Activated CD4-positive, alpha-beta memory T cell treated with anti-CD3 and anti-CD28 coated beads, Interleukin-2, amount 10 ng/mL, durations not matched to agents 7 days and 5 days (primary cell): ENCODE measurements at regions of chr1 and their contacts with region 1.

Region 1: DNA sequence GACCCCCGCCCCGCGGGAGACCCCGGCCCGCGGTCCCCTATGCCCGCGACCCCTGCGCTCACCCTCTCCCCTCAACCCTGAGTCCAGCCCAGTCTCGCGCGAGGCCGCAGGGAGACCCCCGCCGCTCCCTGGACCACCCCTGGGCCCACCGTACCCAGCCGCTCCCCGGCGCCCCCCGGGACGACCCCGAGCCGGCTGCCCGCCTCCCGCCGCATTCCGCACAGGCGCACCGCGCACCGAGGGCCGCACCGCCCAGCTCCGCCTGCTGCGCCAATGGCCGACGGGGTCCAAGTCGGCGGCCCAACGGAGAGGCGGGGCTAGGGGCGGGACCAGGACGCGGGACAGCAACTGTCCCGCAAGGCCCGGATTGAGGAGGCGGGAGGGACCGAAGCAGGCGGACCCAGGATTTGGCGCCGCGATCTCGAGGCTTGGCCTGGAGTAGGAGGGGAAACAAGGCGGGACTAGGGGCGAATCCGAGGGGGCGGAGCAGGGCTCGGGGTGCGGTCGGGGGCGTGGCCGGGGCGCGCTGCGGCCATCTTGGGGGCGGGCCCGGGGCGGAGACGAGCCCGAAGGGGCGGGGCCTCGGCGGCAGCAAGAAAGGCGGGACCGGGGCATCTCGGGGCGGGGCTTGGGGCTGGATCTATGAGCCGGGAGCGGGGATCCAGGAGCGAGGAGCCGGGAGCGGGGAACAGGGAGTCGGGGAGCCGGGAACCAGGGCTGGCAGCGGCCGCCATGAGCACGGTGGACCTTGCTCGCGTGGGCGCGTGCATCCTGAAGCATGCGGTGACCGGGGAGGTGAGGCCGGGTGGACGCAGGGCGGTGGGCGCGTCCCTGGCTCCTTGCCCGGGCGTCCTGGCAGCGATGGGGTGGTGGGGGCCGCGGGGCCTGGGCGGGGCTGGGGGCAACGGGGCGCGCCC is at the start of gene PRXL2B:
- DNase-seq: peak; percentile 99
- H3K4me3 Mint-ChIP-seq: peak within 1 kb of the TSS; percentile 88
- H3K27ac Mint-ChIP-seq: peak within 1 kb of the TSS; percentile 93
- H3K4me1 Mint-ChIP-seq: peaks cover 33% of the 10 kb centered on the region
- H3K27me3 Mint-ChIP-seq: no peaks in the 10 kb centered on the region
- total RNA-seq, gene PRXL2B: 17.0 to 22.2 TPM

Region 2: GRCh38 chr1:2391041-2391930 is 195.1 kb before region 1 on chr1 and contains the starts of genes MORN1 and RER1:
- CTCF ChIA-PET with region 1: interaction called, 3 read pairs
- POLR2A ChIA-PET with region 1: interaction called, 26 read pairs
- DNase-seq: peak; percentile 99
- H3K4me3 Mint-ChIP-seq: peak within 1 kb of the TSS; percentile 85
- H3K27ac Mint-ChIP-seq: peak within 1 kb of the TSS; percentile 79
- H3K4me1 Mint-ChIP-seq: peaks cover 45% of the 10 kb centered on the region
- H3K27me3 Mint-ChIP-seq: no peaks in the 10 kb centered on the region
- total RNA-seq, gene MORN1: 6.2 to 6.3 TPM
- total RNA-seq, gene RER1: 151 to 160 TPM

Region 3: GRCh38 chr1:2412519-2413233 is 173.7 kb before region 1 on chr1 and contains the start of gene PEX10:
- CTCF ChIA-PET with region 1: interaction called, 18 read pairs
- POLR2A ChIA-PET with region 1: interaction called, 18 read pairs
- DNase-seq: peak; percentile 99
- H3K4me3 Mint-ChIP-seq: peak within 1 kb of the TSS; percentile 85
- H3K27ac Mint-ChIP-seq: peak within 1 kb of the TSS; percentile 94
- H3K4me1 Mint-ChIP-seq: peaks cover 40% of the 10 kb centered on the region
- H3K27me3 Mint-ChIP-seq: no peaks in the 10 kb centered on the region
- total RNA-seq, gene PEX10: 6.8 to 9.5 TPM

Region 4: GRCh38 chr1:2525920-2526823 is 60.2 kb before region 1 on chr1 and contains the start of gene PANK4:
- CTCF ChIA-PET with region 1: interaction called, 18 read pairs
- POLR2A ChIA-PET with region 1: interaction called, 30 read pairs
- DNase-seq: peak; percentile 93
- H3K4me3 Mint-ChIP-seq: peak within 1 kb of the TSS; percentile 80
- H3K27ac Mint-ChIP-seq: peak within 1 kb of the TSS; percentile 93
- H3K4me1 Mint-ChIP-seq: peaks cover 51% of the 10 kb centered on the region
- H3K27me3 Mint-ChIP-seq: peaks cover 21% of the 10 kb centered on the region
- total RNA-seq, gene PANK4: 71.7 to 72.6 TPM

Region 5: DNA sequence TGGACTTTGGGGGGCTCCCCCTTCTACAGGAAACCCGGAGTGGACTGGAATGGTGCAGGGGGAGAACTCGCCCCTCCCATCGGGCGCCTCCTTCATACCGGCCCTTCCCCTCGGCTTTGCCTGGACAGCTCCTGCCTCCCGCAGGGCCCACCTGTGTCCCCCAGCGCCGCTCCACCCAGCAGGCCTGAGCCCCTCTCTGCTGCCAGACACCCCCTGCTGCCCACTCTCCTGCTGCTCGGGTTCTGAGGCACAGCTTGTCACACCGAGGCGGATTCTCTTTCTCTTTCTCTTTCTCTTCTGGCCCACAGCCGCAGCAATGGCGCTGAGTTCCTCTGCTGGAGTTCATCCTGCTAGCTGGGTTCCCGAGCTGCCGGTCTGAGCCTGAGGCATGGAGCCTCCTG is 30.1 kb before region 1 on chr1 and contains the start of gene TNFRSF14:
- CTCF ChIA-PET with region 1: interaction called, 32 read pairs
- POLR2A ChIA-PET with region 1: interaction called, 169 read pairs
- DNase-seq: peak; percentile 85
- H3K4me3 Mint-ChIP-seq: peak within 1 kb of the TSS; percentile 95
- H3K27ac Mint-ChIP-seq: peak within 1 kb of the TSS; percentile 95
- H3K4me1 Mint-ChIP-seq: peaks cover 44% of the 10 kb centered on the region
- H3K27me3 Mint-ChIP-seq: no peaks in the 10 kb centered on the region
- total RNA-seq, gene TNFRSF14: 171 to 173 TPM

Region 6: GRCh38 chr1:2561898-2562545 is 24.4 kb before region 1 on chr1:
- CTCF ChIA-PET with region 1: interaction called, 32 read pairs
- POLR2A ChIA-PET with region 1: interaction called, 169 read pairs
- DNase-seq: no peak
- H3K4me3 Mint-ChIP-seq: no peak overlapping the region
- H3K27ac Mint-ChIP-seq: no peak overlapping the region
- H3K4me1 Mint-ChIP-seq: peaks cover 19% of the 10 kb centered on the region
- H3K27me3 Mint-ChIP-seq: no peaks in the 10 kb centered on the region

Region 7: GRCh38 chr1:2575801-2576663 is 10.4 kb before region 1 on chr1:
- CTCF ChIA-PET with region 1: interaction called, 4 read pairs
- POLR2A ChIA-PET with region 1: interaction called, 44 read pairs
- DNase-seq: no peak
- H3K4me3 Mint-ChIP-seq: no peak overlapping the region
- H3K27ac Mint-ChIP-seq: peak overlapping the region; percentile 92
- H3K4me1 Mint-ChIP-seq: peaks cover 58% of the 10 kb centered on the region
- H3K27me3 Mint-ChIP-seq: peaks cover 3% of the 10 kb centered on the region

Region 8: DNA sequence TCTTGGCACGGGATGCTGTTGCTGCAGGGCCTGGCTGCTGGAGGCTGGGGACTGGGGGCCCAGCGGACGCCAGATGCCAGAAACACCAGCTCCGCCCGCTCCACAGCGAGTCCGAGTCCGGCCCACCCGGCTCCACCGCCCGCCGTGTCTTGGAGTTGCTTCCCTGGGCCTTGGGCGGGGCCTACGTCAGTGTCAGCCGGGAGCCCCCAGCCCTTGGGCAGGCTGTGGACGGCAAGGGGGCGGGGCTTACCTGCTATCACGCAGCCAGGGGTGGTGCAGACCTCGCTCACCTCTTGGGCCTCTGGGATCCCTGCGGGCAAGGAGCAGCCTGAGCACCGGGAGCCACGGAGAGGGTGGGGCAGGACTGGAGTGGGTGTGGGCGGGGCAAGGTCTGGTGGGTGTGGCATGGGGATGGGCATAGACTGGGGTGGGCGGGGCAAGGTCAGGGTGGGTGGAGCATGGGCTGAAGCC is 24.7 kb after region 1 on chr1:
- CTCF ChIA-PET with region 1: no interaction called
- POLR2A ChIA-PET with region 1: no interaction called
- DNase-seq: no peak
- H3K4me3 Mint-ChIP-seq: no peak overlapping the region
- H3K27ac Mint-ChIP-seq: no peak overlapping the region
- H3K4me1 Mint-ChIP-seq: no peaks in the 10 kb centered on the region
- H3K27me3 Mint-ChIP-seq: peaks cover 3% of the 10 kb centered on the region

Region 9: DNA sequence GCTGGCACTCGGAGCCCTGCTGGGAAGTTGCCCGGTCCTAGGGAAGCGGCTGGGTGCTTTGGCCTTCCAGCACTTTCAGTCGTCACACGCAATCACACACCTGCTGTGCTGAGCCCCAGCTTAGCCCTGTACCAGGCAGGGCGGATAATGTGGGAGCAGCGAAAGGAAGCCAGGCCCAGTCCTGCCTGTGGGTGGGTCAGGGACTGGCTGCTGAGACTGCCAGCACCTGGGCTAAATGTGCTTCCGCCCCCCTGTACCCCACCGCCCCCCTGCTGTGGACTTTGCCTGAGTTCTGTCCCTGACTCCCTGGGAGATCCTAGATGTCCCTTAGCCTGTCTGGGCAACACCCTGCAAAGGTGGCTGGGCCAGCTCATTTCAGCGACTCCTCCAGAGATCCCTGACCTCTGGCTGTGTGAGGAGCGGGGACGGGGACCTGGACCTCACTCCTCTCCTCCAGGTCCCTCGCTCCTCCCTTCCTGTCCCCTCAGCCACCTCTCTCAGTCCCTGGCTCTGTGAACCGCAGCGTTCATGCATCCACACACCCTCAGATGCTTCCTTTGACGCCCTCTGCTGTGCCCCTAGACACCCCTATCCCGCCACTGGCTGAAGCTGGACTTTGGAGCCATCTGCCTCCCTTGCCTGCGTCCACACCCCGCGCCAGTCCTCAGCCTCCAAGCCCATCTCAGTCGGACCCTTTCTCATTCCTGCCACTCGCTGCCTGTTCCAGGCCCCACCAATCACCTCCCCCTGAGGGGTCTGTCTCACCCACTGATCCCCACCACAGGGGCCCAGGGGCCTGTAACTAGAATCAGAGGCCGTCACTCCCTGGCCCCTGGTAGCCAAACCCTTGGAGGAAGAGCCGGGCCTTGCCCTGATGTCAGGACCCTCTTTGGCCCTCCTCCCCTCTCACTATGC is 45.0 kb after region 1 on chr1:
- CTCF ChIA-PET with region 1: no interaction called
- POLR2A ChIA-PET with region 1: no interaction called
- DNase-seq: no peak
- H3K4me3 Mint-ChIP-seq: no peak overlapping the region
- H3K27ac Mint-ChIP-seq: no peak overlapping the region
- H3K4me1 Mint-ChIP-seq: no peaks in the 10 kb centered on the region
- H3K27me3 Mint-ChIP-seq: peaks cover 32% of the 10 kb centered on the region